Left colon (tissue), 2 donors: ENCODE measurements at regions of chr19 and their contacts with region 1.

Region 1: DNA sequence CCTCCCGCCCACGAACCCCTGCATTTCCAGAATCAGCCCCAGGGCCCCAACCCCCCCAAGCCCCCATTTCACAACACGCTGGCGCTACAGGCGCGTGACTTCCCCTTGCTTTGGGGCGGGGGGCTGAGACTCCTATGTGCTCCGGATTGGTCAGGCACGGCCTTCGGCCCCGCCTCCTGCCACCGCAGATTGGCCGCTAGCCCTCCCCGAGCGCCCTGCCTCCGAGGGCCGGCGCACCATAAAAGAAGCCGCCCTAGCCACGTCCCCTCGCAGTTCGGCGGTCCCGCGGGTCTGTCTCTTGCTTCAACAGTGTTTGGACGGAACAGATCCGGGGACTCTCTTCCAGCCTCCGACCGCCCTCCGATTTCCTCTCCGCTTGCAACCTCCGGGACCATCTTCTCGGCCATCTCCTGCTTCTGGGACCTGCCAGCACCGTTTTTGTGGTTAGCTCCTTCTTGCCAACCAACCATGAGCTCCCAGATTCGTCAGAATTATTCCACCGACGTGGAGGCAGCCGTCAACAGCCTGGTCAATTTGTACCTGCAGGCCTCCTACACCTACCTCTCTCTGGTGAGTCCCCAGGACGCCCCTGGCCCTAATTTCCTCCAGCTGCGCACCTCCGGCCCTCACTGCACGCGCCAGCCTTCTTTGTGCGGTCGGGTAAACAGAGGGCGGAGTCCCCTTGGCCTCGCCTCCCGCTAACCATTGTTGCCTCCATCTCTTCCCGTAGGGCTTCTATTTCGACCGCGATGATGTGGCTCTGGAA is at the start of gene FTL:
- DNase-seq: peak; percentile 98
- ATAC-seq: peak; percentile 66
- total RNA-seq, gene FTL: 931 to 1,901 TPM

Region 2: DNA sequence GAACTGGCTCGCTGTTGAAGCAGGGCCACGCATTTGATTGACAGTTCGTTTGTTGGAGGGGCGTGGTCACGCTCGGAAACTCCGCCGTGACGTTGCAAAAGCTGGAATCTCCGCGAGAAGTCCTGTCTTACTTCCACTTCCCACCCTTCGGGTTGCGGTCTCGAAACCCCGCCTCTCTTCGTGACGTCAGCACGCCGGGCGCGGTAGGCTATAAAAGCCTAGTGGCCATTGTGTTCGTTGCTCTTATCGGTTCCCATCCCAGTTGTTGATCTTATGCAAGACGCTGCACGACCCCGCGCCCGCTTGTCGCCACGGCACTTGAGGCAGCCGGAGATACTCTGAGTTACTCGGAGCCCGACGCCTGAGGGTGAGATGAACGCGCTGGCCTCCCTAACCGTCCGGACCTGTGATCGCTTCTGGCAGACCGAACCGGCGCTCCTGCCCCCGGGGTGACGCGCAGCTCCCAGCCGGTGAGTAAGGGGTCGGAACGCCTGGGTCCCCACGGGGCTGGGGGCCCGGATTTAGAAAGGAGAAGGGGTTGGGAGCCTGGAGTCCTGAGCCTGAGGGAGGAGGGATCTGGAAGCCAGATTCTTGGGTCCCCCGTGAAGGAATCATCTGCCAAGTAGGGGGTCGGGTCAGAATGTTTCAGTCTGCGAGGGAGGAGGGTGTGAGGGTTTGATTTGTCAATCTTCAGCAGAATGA is 92.9 kb before region 1 on chr19 and contains the start of gene PPP1R15A:
- intact Hi-C with region 1: loop called in 1 of 2 experiments (anchors 10 kb)
- DNase-seq: peak; percentile 97 to 98
- ATAC-seq: peak; percentile 75
- total RNA-seq, gene PPP1R15A: 39.4 to 40.4 TPM